Mammary epithelial cell (primary cell): ENCODE measurements at regions of chr5 and their contacts with region 1.

Region 1: GRCh38 chr5:73395256-73395655 is 53.3 kb downstream of the FOXD1 start:
- DNase-seq: no peak
- H3K4me3 ChIP-seq: no peak overlapping the region
- H3K27ac ChIP-seq: no peak overlapping the region
- H3K4me1 ChIP-seq: no peaks in the 10 kb centered on the region
- H3K27me3 ChIP-seq: no peaks in the 10 kb centered on the region
- CTCF ChIP-seq: no peak

Region 2: GRCh38 chr5:72355706-72356299 is 1039.5 kb before region 1 on chr5:
- CTCF ChIA-PET with region 1: no interaction called
- dilution Hi-C with region 1: no loop called
- in situ Hi-C with region 1: no loop called
- intact Hi-C with region 1: no loop called
- DNase-seq: peak; percentile 21
- H3K4me3 ChIP-seq: no peak overlapping the region
- H3K27ac ChIP-seq: no peak overlapping the region
- H3K4me1 ChIP-seq: no peaks in the 10 kb centered on the region
- H3K27me3 ChIP-seq: no peaks in the 10 kb centered on the region
- CTCF ChIP-seq: peak; percentile 43 to 76

Region 3: GRCh38 chr5:73290242-73290641 is 105.0 kb before region 1 on chr5:
- CTCF ChIA-PET with region 1: no interaction called
- dilution Hi-C with region 1: loop called (anchors 5 kb)
- in situ Hi-C with region 1: no loop called
- intact Hi-C with region 1: no loop called
- DNase-seq: no peak
- H3K4me3 ChIP-seq: no peak overlapping the region
- H3K27ac ChIP-seq: no peak overlapping the region
- H3K4me1 ChIP-seq: no peaks in the 10 kb centered on the region
- H3K27me3 ChIP-seq: no peaks in the 10 kb centered on the region
- CTCF ChIP-seq: no peak

Region 4: GRCh38 chr5:73344835-73345234 is 50.4 kb before region 1 on chr5:
- CTCF ChIA-PET with region 1: no interaction called
- dilution Hi-C with region 1: loop called (anchors 5 kb)
- in situ Hi-C with region 1: no loop called
- intact Hi-C with region 1: no loop called
- DNase-seq: no peak
- H3K4me3 ChIP-seq: no peak overlapping the region
- H3K27ac ChIP-seq: no peak overlapping the region
- H3K4me1 ChIP-seq: no peaks in the 10 kb centered on the region
- H3K27me3 ChIP-seq: no peaks in the 10 kb centered on the region
- CTCF ChIP-seq: no peak